ENCODE measurements at regions of chr10 and their contacts with region 1.

Region 1: GRCh38 chr10:119207367-119207668 is at the start of gene GRK5:
- DNase-seq: peak in 1 of 2 donors; percentile 96
- H3K4me3 ChIP-seq: peak within 1 kb of the TSS; percentile 88 to 94
- H3K27ac ChIP-seq: peak within 1 kb of the TSS; percentile 96
- H3K4me1 ChIP-seq: peaks cover 42% of the 10 kb centered on the region
- H3K27me3 ChIP-seq: no peaks in the 10 kb centered on the region
- CTCF ChIP-seq: no peak
- POLR2A ChIP-seq: peak in 1 of 2 donors; percentile 74
- total RNA-seq, gene GRK5: 16.5 TPM

Region 2: DNA sequence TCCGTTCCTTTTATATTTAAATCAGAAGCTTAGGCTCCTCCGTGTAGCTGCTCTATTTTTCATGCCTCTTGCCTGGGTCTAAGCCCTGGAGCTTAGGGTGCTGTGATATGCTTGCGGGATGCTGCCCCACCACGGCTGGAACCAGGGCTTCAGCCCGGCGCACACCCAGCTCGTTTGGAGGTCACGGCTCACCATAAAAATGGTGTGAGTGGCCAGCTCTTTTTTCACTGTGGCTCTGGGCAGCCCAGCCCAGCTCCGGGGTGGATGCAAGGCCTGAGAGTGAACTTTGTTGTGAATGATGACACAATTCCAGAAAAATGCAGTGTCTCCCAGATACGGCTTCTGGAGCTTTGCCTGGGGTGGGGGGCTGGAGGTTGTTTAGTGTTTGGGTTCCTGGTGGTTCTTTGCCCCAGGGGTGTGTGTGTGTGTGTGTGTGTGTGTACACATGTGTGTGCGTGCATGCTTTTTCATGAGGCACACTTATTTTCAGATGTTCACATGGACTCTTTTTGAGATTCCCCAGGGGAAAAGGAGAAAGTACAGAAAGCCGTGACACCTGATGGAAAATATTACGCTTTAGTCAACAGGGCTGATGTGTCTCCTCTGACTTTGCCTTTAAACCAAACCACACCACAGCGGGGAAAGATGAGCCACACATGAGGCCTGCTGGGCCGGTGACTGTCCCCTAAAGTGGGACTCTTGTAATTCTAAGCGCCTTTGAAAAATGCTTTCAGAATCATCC is 46.3 kb after region 1 on chr10:
- intact Hi-C with region 1: loop called (anchors 5 kb)
- DNase-seq: no peak
- H3K4me3 ChIP-seq: no peak overlapping the region
- H3K27ac ChIP-seq: peak overlapping the region; percentile 85
- H3K4me1 ChIP-seq: peaks cover 64% of the 10 kb centered on the region
- H3K27me3 ChIP-seq: no peaks in the 10 kb centered on the region
- CTCF ChIP-seq: no peak
- POLR2A ChIP-seq: no peak

Region 3: GRCh38 chr10:119441151-119441821 is 234.0 kb after region 1 on chr10:
- intact Hi-C with region 1: loop called (anchors 5 kb)
- DNase-seq: no peak
- H3K4me3 ChIP-seq: no peak overlapping the region
- H3K27ac ChIP-seq: peak overlapping the region; percentile 81
- H3K4me1 ChIP-seq: peaks cover 17% of the 10 kb centered on the region
- H3K27me3 ChIP-seq: no peaks in the 10 kb centered on the region
- CTCF ChIP-seq: no peak
- POLR2A ChIP-seq: no peak

Measured in vagina (tissue), 2 donors.